ENCODE measurements at regions of chr7 and their contacts with region 1.

Region 1: DNA sequence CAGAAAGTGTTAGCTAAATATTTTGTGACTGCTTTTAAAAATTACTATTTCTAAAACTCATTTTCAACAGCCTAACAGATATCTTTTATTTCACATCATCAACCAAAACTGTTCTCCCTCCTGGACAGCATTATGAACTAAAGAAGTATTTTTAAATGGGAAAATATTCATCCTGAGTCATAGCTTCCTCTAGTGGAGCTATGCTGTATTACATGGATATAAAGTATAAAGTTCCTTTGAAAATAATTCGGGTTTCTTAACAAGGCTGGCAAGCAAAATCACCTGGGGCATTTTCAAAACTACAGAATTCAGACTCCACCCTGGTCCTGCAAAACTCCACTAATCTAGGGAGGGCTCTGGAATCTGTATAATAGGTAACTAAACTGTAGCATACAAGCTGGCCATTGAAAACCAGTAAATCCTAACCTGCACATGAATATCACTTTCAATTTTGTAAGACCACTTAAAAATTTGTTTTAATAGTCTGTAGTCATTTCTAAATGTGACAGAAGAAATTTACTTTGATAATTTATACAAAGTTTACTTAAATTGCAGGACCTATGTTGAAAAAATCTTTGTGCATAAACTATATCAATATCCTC is 53.5 kb downstream of the SCIN start:
- DNase-seq: no peak
- CTCF ChIP-seq: peak; percentile 44

Region 2: GRCh38 chr7:12423355-12423994 is 200.5 kb before region 1 on chr7:
- in situ Hi-C with region 1: no loop called
- DNase-seq: no peak
- CTCF ChIP-seq: no peak

Region 3: GRCh38 chr7:12539681-12540080 is 84.3 kb before region 1 on chr7:
- in situ Hi-C with region 1: loop called (anchors 10 kb)
- DNase-seq: no peak
- CTCF ChIP-seq: no peak